ENCODE measurements at regions of chr10 and their contacts with region 1.

Region 1: DNA sequence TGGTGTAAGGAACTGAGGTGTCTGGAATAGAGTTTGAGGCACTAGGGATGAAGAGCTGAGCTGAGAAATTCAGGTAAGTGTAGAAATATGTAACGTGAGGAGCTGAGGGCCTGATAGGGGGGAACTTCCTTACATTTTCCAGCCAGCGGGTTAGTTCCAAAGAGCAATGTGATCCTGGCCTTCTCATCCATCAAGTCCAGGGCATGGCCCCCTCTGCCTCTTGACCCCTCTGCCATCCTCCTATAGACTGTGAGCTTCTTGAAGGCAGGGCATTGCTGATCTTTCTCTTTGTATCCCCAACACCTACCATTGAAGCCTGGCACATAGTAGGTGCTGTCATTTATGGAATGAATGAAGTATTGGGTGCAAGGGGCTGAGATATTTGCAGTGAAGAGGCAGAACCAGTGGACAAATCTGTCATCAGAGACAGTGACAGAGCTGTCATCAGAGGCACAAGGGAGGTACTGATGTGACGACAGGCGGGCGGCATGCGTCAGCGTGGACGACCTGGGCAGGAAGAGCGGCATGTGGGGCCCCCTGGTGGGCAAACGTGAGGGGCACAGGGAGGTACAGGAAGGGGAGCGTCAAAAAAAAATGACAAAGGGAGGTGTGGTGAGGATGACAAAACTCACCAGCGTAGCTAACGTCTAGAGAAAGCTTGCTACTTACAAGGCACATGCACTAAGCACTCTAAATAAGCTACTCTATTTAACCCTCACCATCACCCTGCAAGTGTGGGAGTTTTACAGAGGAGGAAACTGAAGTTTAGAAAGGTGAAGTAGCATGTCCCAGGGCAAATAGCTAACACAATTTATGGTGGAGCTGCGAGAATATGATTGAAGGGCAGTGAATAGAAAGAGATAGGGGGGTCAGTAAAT is 5.2 kb upstream of the CAMK2G start:
- DNase-seq: no peak
- ATAC-seq: peak; percentile 94
- H3K4me3 ChIP-seq: no peak overlapping the region
- H3K27ac ChIP-seq: no peak overlapping the region
- H3K4me1 ChIP-seq: peaks cover 11% of the 10 kb centered on the region
- H3K27me3 ChIP-seq: no peaks in the 10 kb centered on the region
- CTCF ChIP-seq: peak; percentile 95 to 99 (median 97)
- EP300 ChIP-seq: peak in 1 of 2 experiments; percentile 48; a peak in 2 of 4 replicates
- POLR2A ChIP-seq: no peak
- RAD21 ChIP-seq: peak; percentile 91

Region 2: GRCh38 chr10:73772280-73773151 is 107.0 kb before region 1 on chr10:
- CTCF ChIA-PET with region 1: interaction called, 55 read pairs
- POLR2A ChIA-PET with region 1: no interaction called
- RAD21 ChIA-PET with region 1: interaction called, 29 read pairs
- SMC1A ChIA-PET with region 1: interaction called, 23 read pairs
- in situ Hi-C with region 1: no loop called
- intact Hi-C with region 1: loop called (anchors 2 kb)
- DNase-seq: peak; percentile 48
- ATAC-seq: peak; percentile 83
- H3K4me3 ChIP-seq: peak overlapping the region; percentile 94
- H3K27ac ChIP-seq: peak overlapping the region; percentile 83
- H3K4me1 ChIP-seq: peaks cover 5% of the 10 kb centered on the region
- H3K27me3 ChIP-seq: no peaks in the 10 kb centered on the region
- CTCF ChIP-seq: peak in 1 of 3 experiments; percentile 13; a peak in 2 of 6 replicates
- EP300 ChIP-seq: 0 out of 4 replicates have a peak, but pooled peaks of 1 of the 2 experiments have one; percentile 10
- POLR2A ChIP-seq: peak; percentile 79
- RAD21 ChIP-seq: no peak

Region 3: GRCh38 chr10:73848821-73849489 is 30.6 kb before region 1 on chr10:
- CTCF ChIA-PET with region 1: interaction called, 440 read pairs
- POLR2A ChIA-PET with region 1: interaction called, 24 read pairs
- RAD21 ChIA-PET with region 1: interaction called, 299 read pairs
- SMC1A ChIA-PET with region 1: interaction called, 270 read pairs
- in situ Hi-C with region 1: loop called (anchors 5 kb)
- intact Hi-C with region 1: loop called (anchors 1 kb)
- DNase-seq: peak; percentile 85
- ATAC-seq: peak; percentile 99
- H3K4me3 ChIP-seq: no peak overlapping the region
- H3K27ac ChIP-seq: no peak overlapping the region
- H3K4me1 ChIP-seq: peaks cover 5% of the 10 kb centered on the region; the same call in 1 of the 2 replicates
- H3K27me3 ChIP-seq: no peaks in the 10 kb centered on the region
- CTCF ChIP-seq: peak; percentile 99 to 100 (median 99); a peak in 5 of 6 replicates
- EP300 ChIP-seq: peak; percentile 93 to 97
- POLR2A ChIP-seq: no peak
- RAD21 ChIP-seq: peak; percentile 99

Region 4: DNA sequence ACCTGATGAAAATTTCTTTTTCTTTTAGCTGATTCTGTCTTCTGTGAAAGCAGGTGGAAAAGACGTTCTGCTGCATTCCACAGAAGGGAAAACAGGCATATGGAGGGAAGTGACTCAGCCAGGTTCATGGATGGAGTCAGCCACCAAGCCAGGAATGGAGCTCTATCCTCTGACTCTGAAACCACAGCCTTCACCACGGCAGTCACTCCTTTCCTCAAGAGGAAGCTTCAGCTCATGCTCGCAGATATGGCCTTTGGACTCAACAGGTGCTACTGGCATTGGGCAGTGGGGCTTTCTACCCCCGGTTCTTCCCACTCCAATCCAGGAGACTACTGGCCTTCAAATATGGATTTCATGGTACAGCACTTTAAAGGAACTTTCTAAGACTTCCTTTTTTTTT is 19.9 kb after region 1 on chr10:
- CTCF ChIA-PET with region 1: interaction called, 84 read pairs
- POLR2A ChIA-PET with region 1: interaction called, 9 read pairs
- RAD21 ChIA-PET with region 1: interaction called, 9 read pairs
- SMC1A ChIA-PET with region 1: interaction called, 14 read pairs
- in situ Hi-C with region 1: no loop called
- intact Hi-C with region 1: no loop called
- DNase-seq: no peak
- ATAC-seq: no peak
- H3K4me3 ChIP-seq: no peak overlapping the region
- H3K27ac ChIP-seq: no peak overlapping the region
- H3K4me1 ChIP-seq: no peaks in the 10 kb centered on the region
- H3K27me3 ChIP-seq: no peaks in the 10 kb centered on the region; a peak in 1 of 4 replicates
- CTCF ChIP-seq: no peak
- EP300 ChIP-seq: no peak
- POLR2A ChIP-seq: no peak
- RAD21 ChIP-seq: no peak

Region 5: DNA sequence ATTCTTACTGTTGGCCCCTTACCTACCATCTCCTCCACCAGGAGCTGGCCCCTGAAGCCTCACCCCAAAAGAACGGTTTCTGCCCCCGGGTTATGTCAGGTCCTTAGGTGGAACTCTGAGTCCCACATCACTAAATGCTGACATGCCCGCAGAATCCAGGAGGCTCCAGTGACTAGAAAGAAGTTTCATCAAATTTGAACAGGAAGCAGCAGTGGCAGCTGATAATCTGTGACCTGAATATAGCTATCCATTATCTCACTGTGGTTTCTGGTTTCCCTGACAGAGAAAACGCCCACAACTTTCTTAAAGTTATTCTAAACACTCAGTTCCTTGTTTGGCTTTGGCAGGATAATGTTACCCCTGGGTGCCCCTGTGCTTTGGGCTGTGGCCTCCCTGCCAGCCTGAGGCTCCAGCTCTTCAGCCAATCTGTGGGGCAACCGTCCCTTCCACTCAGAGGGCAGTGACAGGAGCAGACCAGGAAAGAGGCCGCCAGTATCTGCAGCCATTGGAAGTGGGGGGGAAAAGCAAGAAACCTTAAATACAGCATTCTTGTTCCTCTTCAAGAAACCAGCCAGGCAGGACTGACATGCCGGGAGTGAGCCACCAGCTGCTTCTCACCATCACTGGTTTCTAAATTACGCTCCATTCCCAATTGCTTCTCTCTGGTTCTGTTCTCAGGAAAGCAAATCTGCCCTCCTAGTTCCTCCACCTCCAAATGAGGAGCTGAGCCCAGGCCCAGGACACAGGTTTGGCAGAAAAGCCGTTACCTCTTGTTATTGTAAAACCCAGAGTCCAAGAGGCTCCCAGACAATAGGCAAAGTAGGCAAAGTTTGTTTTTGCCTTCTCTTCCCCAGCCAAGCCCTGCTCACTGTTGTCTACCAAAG is 77.2 kb after region 1 on chr10:
- CTCF ChIA-PET with region 1: interaction called, 13 read pairs
- POLR2A ChIA-PET with region 1: no interaction called
- RAD21 ChIA-PET with region 1: interaction called, 5 read pairs
- SMC1A ChIA-PET with region 1: interaction called, 3 read pairs
- in situ Hi-C with region 1: no loop called
- intact Hi-C with region 1: no loop called
- DNase-seq: peak; percentile 66
- ATAC-seq: peak; percentile 72
- H3K4me3 ChIP-seq: peak overlapping the region; percentile 55
- H3K27ac ChIP-seq: peak overlapping the region; percentile 80
- H3K4me1 ChIP-seq: peaks cover 54% of the 10 kb centered on the region
- H3K27me3 ChIP-seq: no peaks in the 10 kb centered on the region
- CTCF ChIP-seq: no peak
- EP300 ChIP-seq: peak; percentile 56 to 79
- POLR2A ChIP-seq: no peak
- RAD21 ChIP-seq: no peak

Region 6: DNA sequence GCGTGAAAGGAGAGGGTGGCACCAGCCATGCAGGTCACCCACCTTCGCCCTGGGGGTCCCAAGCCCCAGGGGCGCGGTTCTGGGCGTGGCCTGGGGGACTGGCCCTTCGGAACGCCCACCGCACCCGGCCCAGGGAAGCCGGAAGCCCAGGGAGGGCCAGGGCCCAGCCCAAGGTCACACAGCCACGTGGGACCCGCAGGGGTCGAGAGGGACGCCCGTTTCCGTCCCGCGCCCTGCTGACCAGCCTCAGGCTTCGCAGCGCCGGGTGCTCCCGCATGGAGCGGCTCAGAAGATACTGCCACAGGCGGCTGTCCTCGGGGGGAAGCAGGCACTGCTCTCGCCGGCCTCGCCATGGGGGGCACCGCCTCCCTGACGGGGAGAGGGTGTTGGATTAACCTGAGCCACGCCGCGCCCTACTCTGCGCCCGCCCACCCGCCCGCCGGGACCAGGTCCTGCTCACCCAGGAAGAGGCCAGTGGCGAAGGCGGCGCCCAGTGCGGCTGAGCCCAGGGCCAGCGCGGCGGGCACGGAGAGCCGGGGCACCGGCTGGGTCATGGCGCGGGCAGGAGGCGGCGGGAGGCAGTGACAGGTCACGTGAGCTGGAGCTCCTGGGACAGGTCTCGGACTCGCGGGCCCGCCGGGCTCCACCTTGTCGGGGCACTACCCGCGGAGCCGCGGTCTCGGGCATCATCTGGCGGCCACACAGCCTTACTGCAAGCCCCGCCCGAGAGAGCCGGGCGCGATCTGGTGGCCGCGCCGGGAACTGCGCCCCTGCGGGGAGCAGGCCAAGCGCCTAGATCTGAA is 1356.0 kb after region 1 on chr10 and contains the start of gene COMTD1:
- CTCF ChIA-PET with region 1: no interaction called
- POLR2A ChIA-PET with region 1: no interaction called
- RAD21 ChIA-PET with region 1: no interaction called
- SMC1A ChIA-PET with region 1: no interaction called
- in situ Hi-C with region 1: loop called (anchors 10 kb)
- intact Hi-C with region 1: no loop called
- DNase-seq: peak; percentile 47
- ATAC-seq: peak; percentile 75
- H3K4me3 ChIP-seq: peak within 1 kb of the TSS; percentile 86
- H3K27ac ChIP-seq: peak within 1 kb of the TSS; percentile 82
- H3K4me1 ChIP-seq: peaks cover 11% of the 10 kb centered on the region
- H3K27me3 ChIP-seq: no peaks in the 10 kb centered on the region
- CTCF ChIP-seq: peak; percentile 100; a peak in 5 of 6 replicates
- EP300 ChIP-seq: no peak
- POLR2A ChIP-seq: peak; percentile 67
- RAD21 ChIP-seq: peak; percentile 85
- polyA plus RNA-seq, gene COMTD1: 0.39 to 3.4 TPM

Measured in GM12878 (cell line).